Heart right ventricle (tissue), 16 donors: ENCODE measurements at regions of chr17 and their contacts with region 1.

Region 1: DNA sequence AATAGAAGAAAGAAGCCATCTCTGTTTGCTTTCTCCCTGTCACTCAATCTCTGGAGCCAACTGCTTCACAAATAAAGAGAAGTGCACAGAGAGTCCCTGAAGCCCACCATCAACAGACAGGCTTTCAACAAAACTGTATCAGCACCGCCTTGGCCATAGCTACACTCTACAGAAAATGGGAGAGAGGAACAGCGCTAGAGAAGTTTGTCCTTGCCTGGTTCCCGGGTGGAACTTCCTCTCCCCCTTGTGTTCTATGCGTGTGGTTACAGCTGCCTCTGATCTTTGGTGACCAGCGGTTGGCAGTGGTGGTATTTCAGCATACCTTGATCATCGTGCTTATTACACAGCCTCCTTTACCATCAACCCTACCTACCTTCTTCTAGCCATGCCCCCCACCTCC is 91.4 kb upstream of the CCL2 start:
- DNase-seq: no peak
- ATAC-seq: peak in 3 of 8 donors; percentile 56 to 67 (median 56)
- H3K4me3 ChIP-seq: no peak overlapping the region
- H3K27ac ChIP-seq: no peak overlapping the region
- H3K4me1 ChIP-seq: peaks cover 0 to 17% (median 0%) of the 10 kb centered on the region in 9 donors
- H3K27me3 ChIP-seq: peaks cover 0 to 44% (median 36%) of the 10 kb centered on the region in 7 donors
- CTCF ChIP-seq: peak in 8 of 9 donors; percentile 15 to 67 (median 56)

Region 2: DNA sequence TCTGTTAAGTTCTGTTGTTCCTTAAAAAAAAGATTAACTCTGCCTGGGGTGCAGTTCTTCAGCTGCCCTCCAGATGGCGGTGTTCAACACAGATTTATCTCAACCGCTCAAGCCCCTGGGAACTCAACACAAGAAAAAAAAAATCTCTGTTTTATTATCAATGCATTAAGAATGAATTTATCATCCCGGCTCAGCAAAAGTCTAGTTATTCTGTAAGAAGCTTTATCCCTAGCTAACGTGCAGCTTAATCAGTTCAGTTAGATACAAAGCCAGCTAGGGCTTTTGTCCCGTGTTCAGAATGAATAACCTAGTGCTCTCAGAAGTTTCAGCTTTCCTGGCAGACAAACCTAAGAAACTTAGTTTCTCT is 384.4 kb before region 1 on chr17:
- intact Hi-C with region 1: loop called in 7 of 10 experiments (anchors 5 to 10 kb)
- DNase-seq: peak in 1 of 2 donors; percentile 34
- ATAC-seq: no peak
- H3K4me3 ChIP-seq: no peak overlapping the region
- H3K27ac ChIP-seq: no peak overlapping the region
- H3K4me1 ChIP-seq: no peaks in the 10 kb centered on the region
- H3K27me3 ChIP-seq: peaks cover 0 to 55% (median 21%) of the 10 kb centered on the region in 7 donors
- CTCF ChIP-seq: peak; percentile 90 to 98 (median 94)

Region 3: GRCh38 chr17:33786478-33786877 is 377.2 kb before region 1 on chr17:
- intact Hi-C with region 1: loop called in 2 of 10 experiments (anchors 5 to 10 kb)
- DNase-seq: peak; percentile 13 to 17
- ATAC-seq: no peak
- H3K4me3 ChIP-seq: no peak overlapping the region
- H3K27ac ChIP-seq: no peak overlapping the region
- H3K4me1 ChIP-seq: no peaks in the 10 kb centered on the region
- H3K27me3 ChIP-seq: peaks cover 0 to 39% (median 20%) of the 10 kb centered on the region in 7 donors
- CTCF ChIP-seq: no peak

Region 4: GRCh38 chr17:33927732-33928133 is 235.9 kb before region 1 on chr17:
- intact Hi-C with region 1: loop called in 3 of 10 experiments (anchors 5 kb)
- DNase-seq: no peak
- ATAC-seq: peak in 1 of 8 donors; percentile 49
- H3K4me3 ChIP-seq: no peak overlapping the region
- H3K27ac ChIP-seq: no peak overlapping the region
- H3K4me1 ChIP-seq: no peaks in the 10 kb centered on the region
- H3K27me3 ChIP-seq: peaks cover 0 to 60% (median 32%) of the 10 kb centered on the region in 7 donors
- CTCF ChIP-seq: peak in 7 of 9 donors; percentile 19 to 60 (median 52)